Activated T-helper 1 cell treated with anti-CD3 and anti-CD28 coated beads, Interleukin-12 subunit alpha, Interleukin-12 subunit beta, Interleukin-2, Interleukin-4 antibody, amounts not matched to agents 30 ng/mL and 10 ng/mL and 1 ng/mL, durations not matched to agents 14 hours and 24 hours and 36 hours (primary cell): ENCODE measurements at regions of chr6 and their contacts with region 1.

Region 1: GRCh38 chr6:2749969-2750600 is 637 bp downstream of the MYLK4 start:
- DNase-seq: peak; percentile 42
- H3K4me3 Mint-ChIP-seq: no peak overlapping the region
- H3K27ac Mint-ChIP-seq: no peak overlapping the region
- H3K4me1 Mint-ChIP-seq: peaks cover 4% of the 10 kb centered on the region
- H3K27me3 Mint-ChIP-seq: peaks cover 46% of the 10 kb centered on the region

Region 2: GRCh38 chr6:1596088-1596852 is 1153.8 kb before region 1 on chr6:
- intact Hi-C with region 1: loop called (anchors 1 kb)
- DNase-seq: peak; percentile 50
- H3K4me3 Mint-ChIP-seq: no peak overlapping the region
- H3K27ac Mint-ChIP-seq: no peak overlapping the region
- H3K4me1 Mint-ChIP-seq: peaks cover 4% of the 10 kb centered on the region
- H3K27me3 Mint-ChIP-seq: peaks cover 55% of the 10 kb centered on the region

Region 3: GRCh38 chr6:2738373-2738979 is 11.6 kb before region 1 on chr6:
- intact Hi-C with region 1: loop called (anchors 1 kb)
- DNase-seq: no peak
- H3K4me3 Mint-ChIP-seq: no peak overlapping the region
- H3K27ac Mint-ChIP-seq: no peak overlapping the region
- H3K4me1 Mint-ChIP-seq: peaks cover 5% of the 10 kb centered on the region
- H3K27me3 Mint-ChIP-seq: peaks cover 15% of the 10 kb centered on the region